ENCODE measurements at regions of chr11 and their contacts with region 1.

Region 1: DNA sequence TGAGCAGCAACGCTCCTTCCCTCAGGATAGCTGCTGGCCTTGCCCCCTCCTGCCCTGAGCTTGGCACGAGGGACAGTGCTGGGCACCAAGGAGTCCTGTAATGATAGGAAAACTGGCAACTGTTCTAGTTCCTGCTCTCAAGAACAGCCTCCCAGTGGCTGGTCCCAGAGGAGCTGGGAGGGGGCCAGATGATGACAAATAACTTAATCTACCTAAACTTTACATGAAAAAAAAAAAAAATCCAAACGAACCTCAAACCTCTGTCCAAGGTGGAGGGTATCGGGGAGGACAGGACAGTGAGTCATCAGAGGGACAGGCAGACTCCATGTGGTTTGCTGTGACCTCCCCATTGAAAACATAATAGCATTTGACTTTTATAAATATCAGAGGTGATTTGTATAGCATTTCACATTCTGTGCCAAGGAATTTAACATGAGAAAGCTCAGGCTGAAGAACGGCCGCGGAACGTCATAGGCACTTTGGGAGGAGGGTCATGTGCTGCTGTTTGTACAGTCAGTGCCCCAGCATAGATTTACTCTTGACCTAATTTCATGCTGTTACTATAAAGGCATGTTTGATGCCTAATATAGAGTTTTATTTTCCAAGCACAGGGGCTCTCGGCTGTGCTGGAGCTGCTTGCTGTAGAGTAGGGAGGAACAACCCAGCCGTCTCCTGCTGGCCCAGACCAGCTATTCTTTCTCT is 98.2 kb upstream of the NNMT start:
- DNase-seq: peak; percentile 85

Region 2: DNA sequence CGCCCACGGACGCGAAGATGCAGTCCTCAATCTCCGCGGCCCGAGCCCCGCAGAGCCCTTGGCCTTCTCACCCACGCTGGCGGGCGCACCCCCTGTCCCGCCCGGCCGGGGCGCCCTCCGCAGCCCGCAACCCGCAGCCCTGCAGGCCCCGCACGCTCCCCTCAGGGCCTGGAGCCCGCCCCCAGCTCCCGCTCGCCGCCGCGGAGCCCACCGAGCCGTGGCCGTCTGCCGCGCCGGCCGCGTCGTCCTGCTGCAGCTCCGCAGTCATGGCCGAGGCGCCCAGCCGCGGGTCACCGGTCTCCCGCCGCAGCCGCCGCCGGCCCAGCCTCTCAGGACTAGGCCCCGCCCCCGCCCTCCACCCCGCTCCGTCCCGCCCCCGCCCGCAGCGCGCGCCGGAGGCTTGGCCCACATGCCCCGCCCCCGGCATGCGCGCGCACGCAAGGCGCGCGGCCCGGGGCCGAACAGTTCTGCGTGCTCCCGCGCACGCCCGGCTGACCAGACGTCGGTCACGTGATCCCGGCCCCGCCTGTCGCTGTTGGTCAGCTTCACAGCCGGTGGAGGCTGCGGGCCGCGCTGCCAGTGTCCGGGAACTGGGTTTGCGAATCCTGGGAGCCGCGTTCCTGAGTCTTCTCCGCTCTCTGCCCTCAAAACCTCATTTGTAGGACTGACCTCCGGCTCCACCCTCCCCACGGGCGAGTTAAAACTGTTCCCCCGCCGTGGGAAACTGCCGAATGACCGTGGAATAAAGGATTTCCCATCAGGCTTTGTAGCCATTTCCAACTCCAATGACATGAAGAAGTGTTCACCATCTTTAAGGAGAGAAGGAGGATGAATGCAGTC is 322.5 kb before region 1 on chr11 and contains the start of gene USP28:
- intact Hi-C with region 1: loop called (anchors 10 kb)
- DNase-seq: peak; percentile 99
- total RNA-seq, gene USP28: 139 TPM

Region 3: DNA sequence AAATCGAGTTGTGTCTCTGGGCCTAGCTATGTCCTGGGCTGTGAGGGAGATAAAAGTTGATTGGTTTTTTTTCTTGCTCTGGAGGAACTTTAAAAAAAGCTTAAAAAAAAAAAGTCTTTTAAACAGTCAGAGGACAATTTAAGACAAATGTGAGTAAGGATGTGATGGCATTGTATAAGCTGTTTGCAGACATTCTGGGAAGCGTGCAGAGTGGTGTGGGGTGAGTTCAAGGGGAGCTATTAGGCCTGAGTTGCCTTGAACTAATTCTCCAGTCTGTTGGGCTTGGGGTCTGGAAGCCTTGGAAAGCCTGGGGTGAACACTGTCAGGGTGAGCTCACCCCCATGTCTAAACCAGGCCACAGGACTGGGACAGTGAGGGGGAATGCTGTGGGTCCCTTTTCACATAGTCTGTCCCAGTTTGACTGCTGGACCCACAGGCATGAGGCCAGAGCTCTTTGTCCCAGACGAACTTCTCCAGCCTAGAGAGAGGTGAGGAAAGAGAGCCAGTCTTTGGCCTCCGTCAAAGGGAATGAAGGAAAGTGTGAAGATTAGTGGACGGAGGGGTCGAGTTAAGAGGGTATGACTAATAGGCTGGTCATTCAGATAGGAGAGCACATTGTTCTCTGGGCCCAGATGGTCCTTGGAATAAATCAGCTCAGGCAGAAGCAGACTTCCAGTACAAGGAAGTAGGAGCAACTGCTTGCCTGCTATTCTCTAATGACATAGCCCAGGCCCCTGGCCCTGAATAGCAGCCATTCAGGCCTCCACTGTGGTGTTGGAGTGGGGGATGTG is 21.8 kb after region 1 on chr11:
- intact Hi-C with region 1: loop called (anchors 2 kb)
- DNase-seq: no peak

Region 4: GRCh38 chr11:114243461-114244372 is 45.8 kb after region 1 on chr11:
- intact Hi-C with region 1: loop called (anchors 2 kb)
- DNase-seq: peak; percentile 85

Region 5: GRCh38 chr11:114257621-114258558 is 59.9 kb after region 1 on chr11:
- intact Hi-C with region 1: loop called (anchors 2 kb)
- DNase-seq: peak; percentile 76

Measured in cardiac septum (tissue), 1 donor.